Heart right ventricle (tissue), 16 donors: ENCODE measurements at regions of chr5 and their contacts with region 1.

Region 1: GRCh38 chr5:124748687-124749594 is 2.5 kb upstream of the ZNF608 start:
- DNase-seq: peak; percentile 30 to 84
- ATAC-seq: peak; percentile 73 to 91 (median 88)
- H3K4me3 ChIP-seq: peak overlapping the region; percentile 48 to 81 (median 68)
- H3K27ac ChIP-seq: peak overlapping the region; percentile 76 to 98 (median 92)
- H3K4me1 ChIP-seq: peaks cover 0 to 40% (median 8%) of the 10 kb centered on the region in 9 donors
- H3K27me3 ChIP-seq: peaks cover 0 to 36% (median 0%) of the 10 kb centered on the region in 7 donors
- CTCF ChIP-seq: peak in 2 of 9 donors; percentile 2 to 13

Region 2: DNA sequence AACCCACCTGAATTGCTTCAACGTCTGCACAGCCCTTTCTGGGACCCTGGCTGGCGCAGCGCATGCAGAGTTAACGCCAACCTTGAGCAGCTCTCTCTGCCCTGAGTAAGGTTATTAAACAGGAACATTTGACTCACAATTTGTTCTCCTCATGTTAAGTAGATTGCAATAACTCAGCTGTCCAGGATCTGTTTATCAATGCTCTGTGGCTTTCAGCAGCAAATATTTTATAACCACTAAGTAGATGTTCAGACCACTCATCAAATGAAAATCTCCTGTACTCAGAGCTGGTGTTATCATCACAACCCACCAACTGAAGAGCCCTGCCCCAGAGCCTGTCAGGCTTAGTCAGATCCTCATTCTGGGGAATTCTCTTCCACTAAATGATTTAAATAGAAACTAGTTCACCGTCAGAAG is 405.5 kb before region 1 on chr5:
- intact Hi-C with region 1: loop called in 1 of 10 experiments (anchors 5 kb)
- DNase-seq: no peak
- ATAC-seq: peak in 4 of 8 donors; percentile 24 to 79 (median 48)
- H3K4me3 ChIP-seq: no peak overlapping the region
- H3K27ac ChIP-seq: peak overlapping the region in 1 of 10 donors; percentile 12
- H3K4me1 ChIP-seq: peaks cover 5 to 38% (median 28%) of the 10 kb centered on the region in 9 donors
- H3K27me3 ChIP-seq: no peaks in the 10 kb centered on the region
- CTCF ChIP-seq: no peak

Region 3: GRCh38 chr5:124649491-124650146 is 99.3 kb before region 1 on chr5:
- intact Hi-C with region 1: loop called in 8 of 10 experiments (anchors 2 to 10 kb)
- DNase-seq: peak; percentile 70 to 79
- ATAC-seq: peak; percentile 35 to 66 (median 53)
- H3K4me3 ChIP-seq: peak overlapping the region in 8 of 10 donors; percentile 8 to 65 (median 24)
- H3K27ac ChIP-seq: peak overlapping the region in 9 of 10 donors; percentile 29 to 96 (median 83)
- H3K4me1 ChIP-seq: peaks cover 0 to 63% (median 47%) of the 10 kb centered on the region in 9 donors
- H3K27me3 ChIP-seq: peaks cover 0 to 80% (median 0%) of the 10 kb centered on the region in 7 donors
- CTCF ChIP-seq: peak in 1 of 9 donors; percentile 16

Region 4: DNA sequence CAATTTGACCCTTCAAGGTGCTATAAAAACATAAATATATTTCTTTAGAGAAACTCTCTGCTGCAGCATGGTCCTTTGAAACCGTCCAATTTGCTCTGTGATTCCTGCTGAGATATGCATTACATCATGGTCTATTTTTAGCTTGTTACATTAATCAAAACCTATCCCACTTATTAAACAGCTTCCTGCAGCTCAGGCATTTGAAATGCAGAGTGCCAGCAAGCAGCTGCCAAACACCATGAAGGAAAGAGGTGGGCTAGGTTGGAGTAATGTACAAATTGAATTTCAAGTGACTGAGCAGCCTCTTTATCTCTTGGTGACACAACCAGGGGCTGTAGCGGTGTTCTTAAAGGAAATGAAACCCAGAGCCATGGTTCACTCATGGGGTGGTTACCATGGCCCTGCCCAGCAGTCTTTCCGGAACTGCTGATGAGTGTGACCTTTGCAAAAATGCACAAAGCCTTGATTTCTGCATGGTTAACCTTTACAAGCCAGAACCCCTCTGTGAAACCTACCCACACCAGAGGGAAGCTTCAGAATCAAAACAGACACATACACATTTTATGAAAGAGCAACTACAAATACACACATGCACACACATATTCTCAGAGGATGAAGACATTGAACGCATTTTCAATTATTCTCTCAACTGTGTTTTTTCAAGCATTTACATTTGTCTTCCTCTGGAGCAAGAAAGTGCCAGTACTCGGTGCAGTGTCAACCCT is 153.3 kb after region 1 on chr5:
- intact Hi-C with region 1: loop called in 8 of 10 experiments (anchors 1 to 10 kb)
- DNase-seq: no peak
- ATAC-seq: peak in 2 of 8 donors; percentile 12 to 34
- H3K4me3 ChIP-seq: no peak overlapping the region
- H3K27ac ChIP-seq: no peak overlapping the region
- H3K4me1 ChIP-seq: peaks cover 5 to 39% (median 33%) of the 10 kb centered on the region in 9 donors
- H3K27me3 ChIP-seq: no peaks in the 10 kb centered on the region
- CTCF ChIP-seq: no peak

Region 5: DNA sequence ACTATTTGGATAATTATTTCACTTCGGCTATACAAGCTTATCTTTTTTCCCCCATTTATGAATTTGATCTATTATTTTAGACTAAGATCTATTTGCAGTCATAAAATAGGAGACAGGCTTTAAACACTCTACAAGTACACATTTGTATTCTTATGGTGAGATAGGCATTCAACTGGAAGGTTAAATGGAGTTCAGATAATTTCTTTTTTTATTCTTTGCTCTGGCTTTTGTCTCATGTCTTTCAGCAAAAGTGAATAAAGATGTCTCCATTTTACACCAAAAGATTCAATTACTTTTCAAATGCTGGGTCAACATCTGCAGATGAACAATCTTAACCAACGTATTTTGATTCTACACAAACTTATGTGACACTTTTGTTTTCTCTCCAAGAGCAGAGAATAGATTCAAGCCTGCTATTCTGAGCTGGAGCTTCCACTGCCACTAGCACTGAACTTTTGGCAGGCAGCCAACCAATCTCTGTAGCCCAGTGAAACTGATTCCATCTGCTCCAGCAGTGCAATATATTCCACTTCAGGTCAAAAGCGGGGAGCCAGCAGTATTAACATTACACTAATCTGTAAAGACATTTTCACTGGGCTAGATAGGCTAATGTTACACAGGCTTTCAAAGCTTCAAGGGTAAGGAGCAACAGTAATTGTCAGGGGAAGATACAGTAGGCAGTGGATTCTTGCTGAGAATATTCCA is 449.5 kb after region 1 on chr5:
- intact Hi-C with region 1: loop called in 1 of 10 experiments (anchors 5 kb)
- DNase-seq: peak; percentile 51 to 89
- ATAC-seq: peak; percentile 48 to 85 (median 74)
- H3K4me3 ChIP-seq: no peak overlapping the region
- H3K27ac ChIP-seq: peak overlapping the region in 6 of 10 donors; percentile 28 to 74 (median 60)
- H3K4me1 ChIP-seq: peaks cover 0 to 36% (median 17%) of the 10 kb centered on the region in 9 donors
- H3K27me3 ChIP-seq: no peaks in the 10 kb centered on the region
- CTCF ChIP-seq: no peak